WTC11 (cell line): ENCODE measurements at regions of chr15 and their contacts with region 1.

Region 1: DNA sequence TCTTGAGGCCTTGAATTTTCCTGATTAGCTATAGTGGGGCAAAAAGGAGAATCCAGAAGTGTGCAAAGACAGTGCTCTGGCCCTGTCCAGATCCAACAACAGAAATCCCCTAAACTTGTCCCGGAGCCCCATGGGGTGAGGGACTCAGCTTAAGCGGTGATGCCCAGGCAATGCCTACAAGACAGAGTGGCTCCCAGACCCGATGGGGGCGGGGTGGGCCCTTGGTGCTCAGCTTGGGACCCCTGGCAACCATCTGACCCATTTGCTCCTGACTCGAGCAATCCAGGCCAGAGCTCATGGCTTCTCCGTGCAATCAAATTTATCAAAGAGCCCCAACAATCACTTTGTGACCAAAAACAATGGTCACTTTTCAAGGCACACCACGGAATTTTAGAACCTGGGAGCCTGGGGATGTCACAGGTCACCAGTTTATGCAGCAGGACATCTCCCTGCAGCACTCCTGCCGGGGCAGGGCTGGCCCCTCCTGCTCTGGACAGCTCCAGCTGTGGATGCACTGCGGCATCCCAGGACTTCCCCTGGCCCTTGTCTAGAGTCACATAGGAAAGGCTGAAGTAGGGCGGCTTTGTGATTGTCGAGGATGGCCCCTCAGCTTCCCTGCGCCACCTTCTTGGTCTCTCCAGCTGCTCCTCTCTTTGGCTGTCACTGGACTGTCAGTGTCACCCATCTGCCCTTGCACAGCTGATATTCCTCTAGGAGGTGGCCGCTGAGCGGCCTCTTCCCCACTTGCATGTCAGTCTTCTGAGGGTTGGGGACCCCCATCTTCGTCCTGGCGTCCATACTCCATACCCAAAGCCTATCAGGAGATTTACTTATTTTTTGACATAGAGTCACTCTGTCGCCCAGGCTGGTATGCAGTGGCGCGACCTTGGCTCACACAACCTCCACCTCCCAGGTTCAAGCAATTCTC is 28.4 kb downstream of the RGMA start:
- DNase-seq: no peak
- ATAC-seq: no peak
- H3K4me3 Mint-ChIP-seq: peak overlapping the region; percentile 29; the same call in 1 of the 2 replicates
- H3K27ac Mint-ChIP-seq: peak overlapping the region; percentile 89
- H3K4me1 Mint-ChIP-seq: peaks cover 87% of the 10 kb centered on the region
- H3K27me3 Mint-ChIP-seq: no peaks in the 10 kb centered on the region
- CTCF ChIP-seq: no peak

Region 2: GRCh38 chr15:93035953-93036800 is 24.4 kb before region 1 on chr15:
- CTCF ChIA-PET with region 1: interaction called, 17 read pairs
- POLR2A ChIA-PET with region 1: no interaction called
- DNase-seq: peak; percentile 46
- ATAC-seq: peak; percentile 46
- H3K4me3 Mint-ChIP-seq: no peak overlapping the region
- H3K27ac Mint-ChIP-seq: no peak overlapping the region
- H3K4me1 Mint-ChIP-seq: peaks cover 10% of the 10 kb centered on the region
- H3K27me3 Mint-ChIP-seq: no peaks in the 10 kb centered on the region
- CTCF ChIP-seq: peak; percentile 47

Region 3: GRCh38 chr15:93072411-93073394 is 12.1 kb after region 1 on chr15:
- CTCF ChIA-PET with region 1: interaction called, 11 read pairs
- POLR2A ChIA-PET with region 1: interaction called, 5 read pairs
- DNase-seq: peak; percentile 89
- ATAC-seq: peak; percentile 78
- H3K4me3 Mint-ChIP-seq: peak overlapping the region; percentile 97
- H3K27ac Mint-ChIP-seq: peak overlapping the region; percentile 92
- H3K4me1 Mint-ChIP-seq: peaks cover 67% of the 10 kb centered on the region
- H3K27me3 Mint-ChIP-seq: peaks cover 16% of the 10 kb centered on the region
- CTCF ChIP-seq: no peak